ENCODE measurements at regions of chr5 and their contacts with region 1.

Region 1: DNA sequence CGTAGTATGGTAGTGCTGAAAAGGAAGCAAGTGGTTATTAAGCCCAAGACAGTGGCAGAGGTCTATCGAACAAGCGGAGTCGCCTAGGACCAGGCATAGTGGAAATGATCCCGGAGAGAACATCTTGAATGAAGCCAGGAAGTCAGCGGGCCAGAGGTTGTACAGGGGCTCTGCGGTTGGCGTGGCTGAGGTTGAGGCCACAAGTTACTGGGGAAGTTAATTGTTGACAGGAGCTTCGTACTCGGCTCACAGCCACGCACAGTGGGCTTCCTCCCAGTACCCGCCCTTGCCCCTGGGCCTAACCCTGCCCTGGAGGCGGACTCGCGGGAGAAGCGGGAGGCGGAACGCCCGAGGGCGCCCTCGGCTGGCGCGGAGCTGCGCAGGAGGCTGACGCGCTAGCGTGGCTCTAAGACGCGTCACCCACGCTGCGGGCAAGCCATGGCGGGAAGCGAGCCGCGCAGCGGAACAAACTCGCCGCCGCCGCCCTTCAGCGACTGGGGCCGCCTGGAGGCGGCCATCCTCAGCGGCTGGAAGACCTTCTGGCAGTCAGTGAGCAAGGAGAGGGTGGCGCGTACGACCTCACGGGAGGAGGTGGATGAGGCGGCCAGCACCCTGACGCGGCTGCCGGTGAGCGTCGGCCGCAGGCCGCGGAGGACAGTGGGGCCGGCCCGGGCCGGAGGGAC is at the start of gene FBXO4:
- DNase-seq: peak; percentile 82
- H3K4me3 ChIP-seq: peak within 1 kb of the TSS; percentile 66 to 79
- H3K27ac ChIP-seq: peak within 1 kb of the TSS; percentile 32 to 34; a peak in 2 of 4 replicates
- H3K4me1 ChIP-seq: peaks cover 0 to 8% of the 10 kb centered on the region in 2 experiments; a peak in 1 of 4 replicates
- H3K27me3 ChIP-seq: no peaks in the 10 kb centered on the region
- CTCF ChIP-seq: peak; percentile 59
- EP300 ChIP-seq: no peak
- RAD21 ChIP-seq: peak; percentile 33; the same call in 1 of the 2 replicates
- polyA plus RNA-seq, gene FBXO4: 2.9 and 3.9 TPM in 2 replicates

Region 2: GRCh38 chr5:41776435-41776834 is 148.6 kb before region 1 on chr5:
- CTCF ChIA-PET with region 1: no interaction called
- POLR2A ChIA-PET with region 1: no interaction called
- DNase-seq: no peak
- H3K4me3 ChIP-seq: no peak overlapping the region
- H3K27ac ChIP-seq: no peak overlapping the region
- H3K4me1 ChIP-seq: peaks cover 6 to 10% of the 10 kb centered on the region in 2 experiments; a peak in 3 of 4 replicates
- H3K27me3 ChIP-seq: no peaks in the 10 kb centered on the region
- CTCF ChIP-seq: no peak
- EP300 ChIP-seq: no peak
- RAD21 ChIP-seq: no peak

Region 3: DNA sequence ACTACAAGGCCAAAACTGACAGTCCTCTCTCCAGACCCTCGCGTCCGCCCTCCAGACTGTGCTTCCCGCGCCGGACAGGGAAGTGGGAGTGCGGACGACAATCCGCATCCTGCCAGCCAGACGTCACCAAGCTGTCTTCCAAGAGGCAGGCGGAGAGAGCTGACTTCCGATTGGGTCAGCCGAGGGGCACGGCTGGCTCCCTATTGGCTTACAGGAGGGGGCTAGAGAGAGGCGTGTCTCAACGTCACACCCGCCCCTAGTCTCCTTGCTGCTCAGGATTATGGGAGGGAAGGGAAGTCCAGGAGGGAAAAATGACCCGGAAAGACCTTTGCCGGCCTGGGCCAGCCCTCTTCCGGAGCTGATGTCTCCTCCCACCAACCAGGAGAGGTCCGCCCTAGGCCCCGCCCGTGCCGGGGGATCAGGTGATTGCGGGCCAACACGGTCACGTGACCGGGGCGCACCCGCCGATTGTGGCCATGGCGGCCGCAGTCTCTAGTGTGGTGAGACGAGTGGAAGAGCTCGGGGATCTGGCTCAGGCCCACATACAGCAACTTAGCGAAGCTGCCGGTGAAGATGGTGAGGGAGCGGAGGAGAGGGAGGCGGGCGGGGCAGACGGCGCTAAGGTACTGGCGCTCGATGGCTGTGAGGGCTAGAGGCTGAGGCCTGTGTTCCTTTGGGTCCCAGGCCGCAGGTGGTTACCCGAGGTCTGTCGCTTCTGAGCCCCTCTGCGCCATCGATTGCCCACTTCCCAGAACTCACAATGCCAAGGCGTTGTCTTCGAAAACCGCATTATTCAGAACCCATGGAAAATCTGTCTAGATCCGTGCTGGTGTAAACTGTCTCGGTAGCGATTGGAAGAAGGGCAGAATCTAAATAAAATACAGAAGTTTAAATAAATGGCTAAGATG is 20.9 kb before region 1 on chr5 and contains the start of gene RIMOC1:
- CTCF ChIA-PET with region 1: no interaction called
- POLR2A ChIA-PET with region 1: interaction called, 11 read pairs
- DNase-seq: peak; percentile 95
- H3K4me3 ChIP-seq: peak within 1 kb of the TSS; percentile 83 to 98
- H3K27ac ChIP-seq: peak within 1 kb of the TSS; percentile 75 to 82
- H3K4me1 ChIP-seq: peaks cover 8 to 10% of the 10 kb centered on the region in 2 experiments
- H3K27me3 ChIP-seq: no peaks in the 10 kb centered on the region
- CTCF ChIP-seq: no peak
- EP300 ChIP-seq: no peak
- RAD21 ChIP-seq: 0 out of 2 replicates have a peak, but pooled peaks have one; percentile 1
- polyA plus RNA-seq, gene RIMOC1: 6.5 and 9.5 TPM in 2 replicates